ENCODE measurements at regions of chr2 and their contacts with region 1.

Region 1: DNA sequence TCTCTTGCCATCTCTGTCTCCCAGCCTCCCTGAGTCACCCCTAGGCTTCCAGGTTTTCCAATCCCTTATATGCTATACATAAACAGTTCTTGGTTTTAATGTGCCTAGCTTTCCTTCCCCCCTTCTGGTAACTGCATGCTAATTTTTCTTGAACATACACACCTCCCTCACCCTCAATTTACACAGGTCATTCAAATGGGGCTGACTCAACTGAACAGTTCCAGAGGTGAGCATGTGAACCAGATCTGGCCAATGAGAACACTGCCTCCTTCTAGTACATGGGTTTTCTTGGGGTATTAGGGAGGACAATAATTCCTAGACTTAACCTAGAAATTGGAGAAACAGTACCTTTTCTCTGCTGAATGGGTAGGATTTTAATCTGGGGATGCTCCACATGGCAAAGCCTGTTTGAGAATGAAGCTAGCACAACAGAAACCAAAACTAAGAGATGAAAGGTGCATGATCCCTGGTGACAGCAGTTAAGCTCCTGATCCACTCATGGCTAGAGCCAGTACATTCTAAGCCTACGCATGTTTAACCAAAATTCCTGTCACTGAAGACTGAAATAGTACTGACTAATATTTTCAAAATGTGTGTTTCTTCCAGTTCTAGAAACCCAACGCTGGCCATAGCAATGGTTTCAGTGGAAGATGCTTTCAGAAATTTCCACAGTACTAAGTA is 11.8 kb downstream of the SLC25A12 start:
- DNase-seq: no peak
- ATAC-seq: no peak
- H3K4me3 ChIP-seq: no peak overlapping the region
- H3K27ac ChIP-seq: no peak overlapping the region
- H3K4me1 ChIP-seq: peaks cover 4% of the 10 kb centered on the region; the same call in 1 of the 2 replicates
- H3K27me3 ChIP-seq: no peaks in the 10 kb centered on the region
- CTCF ChIP-seq: no peak

Region 2: GRCh38 chr2:171346717-171347557 is 535.3 kb before region 1 on chr2:
- CTCF ChIA-PET with region 1: no interaction called
- POLR2A ChIA-PET with region 1: no interaction called
- intact Hi-C with region 1: no loop called
- DNase-seq: no peak
- ATAC-seq: 0 out of 2 replicates have a peak, but pooled peaks have one; percentile 15
- H3K4me3 ChIP-seq: no peak overlapping the region
- H3K27ac ChIP-seq: peak overlapping the region; percentile 65
- H3K4me1 ChIP-seq: peaks cover 25% of the 10 kb centered on the region
- H3K27me3 ChIP-seq: no peaks in the 10 kb centered on the region
- CTCF ChIP-seq: no peak; the same call in 1 of the 2 replicates

Region 3: DNA sequence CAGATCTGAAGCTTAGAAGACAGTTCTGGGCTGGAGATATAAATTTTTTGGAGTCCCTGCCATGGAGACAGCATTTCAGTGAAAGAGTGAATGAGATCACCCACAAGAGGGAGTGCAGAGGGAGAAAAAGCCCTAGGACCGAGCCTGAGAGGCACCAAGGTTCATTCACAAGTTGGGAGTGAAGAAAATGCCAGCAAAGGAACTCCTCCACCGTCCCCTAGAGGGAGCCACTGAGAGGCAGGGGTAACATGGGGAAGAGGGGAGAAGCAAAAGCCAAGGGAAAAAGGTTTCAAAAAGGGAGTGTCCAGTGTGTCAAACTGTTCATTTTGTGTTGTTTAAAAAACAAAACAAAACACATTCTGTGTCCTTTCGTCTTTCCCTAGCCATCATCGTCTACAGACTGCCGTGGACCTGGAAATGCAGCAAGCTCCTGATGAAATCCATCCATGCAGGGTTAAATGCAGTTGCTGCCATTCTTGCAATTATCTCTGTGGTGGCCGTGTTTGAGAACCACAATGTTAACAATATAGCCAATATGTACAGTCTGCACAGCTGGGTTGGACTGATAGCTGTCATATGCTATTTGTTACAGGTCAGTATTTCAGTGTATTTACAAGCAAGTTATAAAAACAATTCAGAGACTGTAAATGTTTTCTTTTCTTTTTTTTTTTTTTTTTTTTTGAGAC is 340.9 kb before region 1 on chr2:
- CTCF ChIA-PET with region 1: no interaction called
- POLR2A ChIA-PET with region 1: no interaction called
- intact Hi-C with region 1: no loop called
- DNase-seq: peak; percentile 51
- ATAC-seq: no peak
- H3K4me3 ChIP-seq: no peak overlapping the region
- H3K27ac ChIP-seq: no peak overlapping the region
- H3K4me1 ChIP-seq: no peaks in the 10 kb centered on the region
- H3K27me3 ChIP-seq: no peaks in the 10 kb centered on the region
- CTCF ChIP-seq: peak; percentile 72

Region 4: GRCh38 chr2:172011812-172012575 is 129.8 kb after region 1 on chr2:
- CTCF ChIA-PET with region 1: no interaction called
- POLR2A ChIA-PET with region 1: no interaction called
- intact Hi-C with region 1: no loop called
- DNase-seq: no peak
- ATAC-seq: no peak
- H3K4me3 ChIP-seq: no peak overlapping the region
- H3K27ac ChIP-seq: no peak overlapping the region
- H3K4me1 ChIP-seq: peaks cover 17% of the 10 kb centered on the region
- H3K27me3 ChIP-seq: no peaks in the 10 kb centered on the region
- CTCF ChIP-seq: no peak

Region 5: GRCh38 chr2:172561270-172561669 is 679.0 kb after region 1 on chr2:
- CTCF ChIA-PET with region 1: no interaction called
- POLR2A ChIA-PET with region 1: interaction called, 12 read pairs
- intact Hi-C with region 1: no loop called
- DNase-seq: no peak
- ATAC-seq: no peak
- H3K4me3 ChIP-seq: no peak overlapping the region
- H3K27ac ChIP-seq: no peak overlapping the region
- H3K4me1 ChIP-seq: peaks cover 11% of the 10 kb centered on the region; the same call in 1 of the 2 replicates
- H3K27me3 ChIP-seq: no peaks in the 10 kb centered on the region
- CTCF ChIP-seq: no peak